A673 (cell line): ENCODE measurements at regions of chr17 and their contacts with region 1.

Region 1: DNA sequence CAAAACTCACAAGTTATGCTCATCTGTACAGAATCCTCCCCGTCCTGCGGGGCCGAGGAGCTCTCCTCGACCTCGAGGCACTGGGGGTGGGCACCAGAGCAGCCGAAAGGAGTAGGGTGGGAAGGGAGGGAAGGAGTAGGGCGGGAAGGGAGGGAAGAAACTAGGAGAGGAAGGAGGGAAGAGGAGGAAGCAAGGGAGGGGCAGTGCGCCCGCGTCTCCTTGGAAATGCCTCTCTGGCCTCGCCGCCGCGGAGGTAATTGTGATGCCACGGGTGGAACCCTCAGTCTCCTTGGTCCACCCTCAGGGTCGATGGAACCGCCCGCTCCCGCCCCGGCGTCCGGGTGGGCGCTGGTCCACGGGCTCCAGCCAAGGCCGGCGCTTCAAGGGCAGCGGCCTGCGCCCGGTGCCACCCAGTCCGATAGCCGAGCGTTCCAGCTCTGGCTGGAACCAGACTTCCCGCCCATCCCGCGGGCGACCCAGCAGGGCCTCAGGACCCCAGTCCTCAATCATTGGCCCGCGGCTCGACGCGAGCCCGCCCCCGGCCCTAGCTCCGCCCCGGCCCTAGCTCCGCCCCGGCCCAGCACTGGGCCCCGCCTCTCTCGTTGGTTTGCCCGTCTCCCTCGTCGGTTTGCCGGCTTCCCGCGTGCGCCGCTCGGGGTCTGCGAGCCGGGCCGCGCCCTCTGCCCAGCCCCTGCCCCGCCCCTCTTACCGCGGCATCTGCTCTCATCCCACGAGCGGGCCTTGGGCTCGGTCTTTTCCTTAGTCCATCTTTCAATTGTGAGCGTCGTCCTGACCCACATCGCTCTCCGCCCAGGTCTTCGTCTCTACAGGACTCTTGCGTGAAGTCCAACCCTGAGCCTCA is 596 bp downstream of the PROCA1 start:
- DNase-seq: peak; percentile 95
- H3K4me3 ChIP-seq: peak overlapping the region; percentile 56
- H3K27ac ChIP-seq: peak overlapping the region; percentile 85
- H3K4me1 ChIP-seq: peaks cover 9% of the 10 kb centered on the region
- H3K27me3 ChIP-seq: no peaks in the 10 kb centered on the region
- CTCF ChIP-seq: no peak

Region 2: GRCh38 chr17:28509789-28510188 is 201.3 kb before region 1 on chr17:
- CTCF ChIA-PET with region 1: no interaction called
- POLR2A ChIA-PET with region 1: interaction called, 10 read pairs
- intact Hi-C with region 1: no loop called
- DNase-seq: no peak
- H3K4me3 ChIP-seq: no peak overlapping the region
- H3K27ac ChIP-seq: no peak overlapping the region
- H3K4me1 ChIP-seq: no peaks in the 10 kb centered on the region
- H3K27me3 ChIP-seq: peaks cover 40% of the 10 kb centered on the region
- CTCF ChIP-seq: no peak

Region 3: GRCh38 chr17:28661635-28662537 is 49.2 kb before region 1 on chr17 and contains the starts of genes SDF2 and SUPT6H:
- CTCF ChIA-PET with region 1: no interaction called
- POLR2A ChIA-PET with region 1: no interaction called
- intact Hi-C with region 1: loop called (anchors 5 kb)
- DNase-seq: peak; percentile 94
- H3K4me3 ChIP-seq: peak within 1 kb of the TSS; percentile 85
- H3K27ac ChIP-seq: peak within 1 kb of the TSS; percentile 96
- H3K4me1 ChIP-seq: peaks cover 18% of the 10 kb centered on the region
- H3K27me3 ChIP-seq: no peaks in the 10 kb centered on the region
- CTCF ChIP-seq: no peak
- total RNA-seq, gene SDF2: 41.1 and 41.6 TPM in 2 replicates
- total RNA-seq, gene SUPT6H: 103 and 105 TPM in 2 replicates